B cell (primary cell): ENCODE measurements at regions of chr20 and their contacts with region 1.

Region 1: DNA sequence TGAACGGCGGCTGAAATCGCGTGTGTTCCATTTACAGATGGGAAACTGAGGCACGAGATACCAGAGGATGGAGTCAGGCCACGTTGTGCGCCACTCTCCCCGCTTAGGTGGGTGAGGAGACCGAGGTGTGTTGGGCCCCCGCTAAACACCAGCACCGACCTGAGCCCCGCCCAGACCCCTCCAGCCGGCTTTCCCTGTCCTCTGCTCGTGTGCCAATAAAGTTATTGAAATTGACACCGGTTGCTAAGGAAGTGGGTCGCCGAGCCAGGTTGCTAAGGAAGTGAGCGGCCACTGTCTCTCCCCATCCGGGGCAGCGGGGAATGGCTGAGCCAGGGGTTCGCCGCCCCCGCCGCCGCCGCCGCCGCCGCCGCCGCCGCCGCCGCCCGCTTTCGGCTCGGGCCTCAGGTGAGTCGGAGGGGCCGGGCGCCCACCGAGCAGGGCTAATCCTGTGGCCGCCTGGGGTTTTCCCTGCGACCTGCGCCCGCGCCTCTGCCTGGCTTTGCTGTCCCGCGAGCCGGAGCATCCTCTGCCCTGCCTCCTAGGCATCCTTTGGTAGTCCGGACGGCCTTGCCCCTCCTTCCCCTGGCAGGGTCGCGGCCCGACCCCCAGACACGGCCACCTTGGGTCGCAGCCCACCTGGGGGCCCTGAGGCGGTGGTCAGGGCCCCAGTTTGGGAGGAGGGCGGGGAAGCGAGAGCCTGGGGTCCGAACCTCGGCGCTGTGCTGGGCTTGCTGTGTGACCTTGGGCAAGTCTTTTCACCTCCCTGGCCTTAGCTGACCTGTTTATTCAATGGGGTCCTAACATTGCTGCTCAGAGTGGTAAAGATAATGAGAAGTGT is at the start of gene KIF3B:
- DNase-seq: peak; percentile 93
- ATAC-seq: peak; percentile 77
- H3K4me3 ChIP-seq: peak within 1 kb of the TSS; percentile 76 to 98 (median 96)
- H3K4me3 Mint-ChIP-seq: peak within 1 kb of the TSS; percentile 95
- H3K27ac ChIP-seq: peak within 1 kb of the TSS; percentile 82 to 92
- H3K27ac Mint-ChIP-seq: peak within 1 kb of the TSS; percentile 94
- H3K4me1 ChIP-seq: peaks cover 33 to 41% of the 10 kb centered on the region in 2 donors
- H3K4me1 Mint-ChIP-seq: peaks cover 51% of the 10 kb centered on the region
- H3K27me3 ChIP-seq: no peaks in the 10 kb centered on the region
- H3K27me3 Mint-ChIP-seq: no peaks in the 10 kb centered on the region
- CTCF ChIP-seq: no peak
- total RNA-seq, gene KIF3B: 16.8 and 17.5 TPM in 2 replicates

Region 2: DNA sequence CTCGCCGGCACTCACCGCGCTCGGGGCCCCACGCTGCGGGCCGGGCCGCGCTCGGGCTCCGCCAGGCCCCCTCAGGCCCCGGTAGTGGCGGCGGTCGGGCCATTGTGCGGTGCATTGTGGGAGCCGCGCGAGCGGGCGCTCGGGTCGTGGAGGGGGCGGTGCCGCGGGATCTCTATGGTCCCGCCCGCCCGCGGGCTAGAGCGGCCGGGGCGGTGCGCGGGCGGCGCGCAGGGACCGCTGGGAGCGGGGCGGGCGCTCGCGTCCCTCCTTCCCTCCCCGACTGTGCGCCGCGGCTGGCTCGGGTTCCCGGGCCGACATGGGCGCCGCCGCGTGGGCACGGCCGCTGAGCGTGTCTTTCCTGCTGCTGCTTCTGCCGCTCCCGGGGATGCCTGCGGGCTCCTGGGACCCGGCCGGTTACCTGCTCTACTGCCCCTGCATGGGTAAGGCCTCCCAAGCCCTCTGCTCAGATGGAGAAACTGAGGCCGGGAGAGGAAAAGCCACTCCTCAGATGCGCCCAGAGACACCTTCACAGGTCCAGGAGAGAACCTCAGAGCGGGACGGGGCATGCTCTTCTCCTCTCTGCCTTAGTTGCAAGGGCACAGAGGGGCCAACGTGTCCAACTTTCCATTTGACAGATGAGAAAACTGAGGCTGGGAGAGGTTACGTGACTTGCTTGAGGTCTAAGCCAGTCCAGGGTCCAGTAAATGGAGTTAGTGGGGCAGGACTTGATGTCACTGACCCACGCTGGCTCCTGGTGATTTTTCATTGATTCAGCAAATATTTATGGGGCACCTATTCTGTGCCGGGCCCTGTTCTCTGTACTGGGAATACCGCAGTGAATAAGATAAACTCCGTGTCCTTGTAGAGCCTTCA is 69.7 kb before region 1 on chr20 and contains the starts of genes PLAGL2 and POFUT1:
- CTCF ChIA-PET with region 1: no interaction called
- POLR2A ChIA-PET with region 1: interaction called, 5 read pairs
- intact Hi-C with region 1: loop called (anchors 2 kb)
- DNase-seq: peak; percentile 91
- ATAC-seq: peak; percentile 98
- H3K4me3 ChIP-seq: peak within 1 kb of the TSS; percentile 78 to 99 (median 98)
- H3K4me3 Mint-ChIP-seq: peak within 1 kb of the TSS; percentile 96
- H3K27ac ChIP-seq: peak within 1 kb of the TSS; percentile 48 to 86
- H3K27ac Mint-ChIP-seq: peak within 1 kb of the TSS; percentile 93
- H3K4me1 ChIP-seq: peaks cover 35 to 39% of the 10 kb centered on the region in 2 donors
- H3K4me1 Mint-ChIP-seq: peaks cover 68% of the 10 kb centered on the region
- H3K27me3 ChIP-seq: no peaks in the 10 kb centered on the region
- H3K27me3 Mint-ChIP-seq: no peaks in the 10 kb centered on the region
- CTCF ChIP-seq: no peak
- total RNA-seq, gene PLAGL2: 18.2 and 18.4 TPM in 2 replicates
- total RNA-seq, gene POFUT1: 18.1 and 19.3 TPM in 2 replicates

Region 3: GRCh38 chr20:32357869-32358631 is 80.5 kb after region 1 on chr20 and contains the start of gene ASXL1:
- CTCF ChIA-PET with region 1: interaction called, 3 read pairs
- POLR2A ChIA-PET with region 1: interaction called, 3 read pairs
- intact Hi-C with region 1: loop called (anchors 1 kb)
- DNase-seq: peak; percentile 96
- ATAC-seq: peak; percentile 83
- H3K4me3 ChIP-seq: peak within 1 kb of the TSS; percentile 83 to 95 (median 91)
- H3K4me3 Mint-ChIP-seq: peak within 1 kb of the TSS; percentile 95
- H3K27ac ChIP-seq: peak within 1 kb of the TSS; percentile 96 to 97
- H3K27ac Mint-ChIP-seq: peak within 1 kb of the TSS; percentile 98
- H3K4me1 ChIP-seq: peaks cover 47 to 71% of the 10 kb centered on the region in 2 donors
- H3K4me1 Mint-ChIP-seq: peaks cover 71% of the 10 kb centered on the region
- H3K27me3 ChIP-seq: no peaks in the 10 kb centered on the region
- H3K27me3 Mint-ChIP-seq: no peaks in the 10 kb centered on the region
- CTCF ChIP-seq: no peak
- total RNA-seq, gene ASXL1: 180 and 183 TPM in 2 replicates

Region 4: DNA sequence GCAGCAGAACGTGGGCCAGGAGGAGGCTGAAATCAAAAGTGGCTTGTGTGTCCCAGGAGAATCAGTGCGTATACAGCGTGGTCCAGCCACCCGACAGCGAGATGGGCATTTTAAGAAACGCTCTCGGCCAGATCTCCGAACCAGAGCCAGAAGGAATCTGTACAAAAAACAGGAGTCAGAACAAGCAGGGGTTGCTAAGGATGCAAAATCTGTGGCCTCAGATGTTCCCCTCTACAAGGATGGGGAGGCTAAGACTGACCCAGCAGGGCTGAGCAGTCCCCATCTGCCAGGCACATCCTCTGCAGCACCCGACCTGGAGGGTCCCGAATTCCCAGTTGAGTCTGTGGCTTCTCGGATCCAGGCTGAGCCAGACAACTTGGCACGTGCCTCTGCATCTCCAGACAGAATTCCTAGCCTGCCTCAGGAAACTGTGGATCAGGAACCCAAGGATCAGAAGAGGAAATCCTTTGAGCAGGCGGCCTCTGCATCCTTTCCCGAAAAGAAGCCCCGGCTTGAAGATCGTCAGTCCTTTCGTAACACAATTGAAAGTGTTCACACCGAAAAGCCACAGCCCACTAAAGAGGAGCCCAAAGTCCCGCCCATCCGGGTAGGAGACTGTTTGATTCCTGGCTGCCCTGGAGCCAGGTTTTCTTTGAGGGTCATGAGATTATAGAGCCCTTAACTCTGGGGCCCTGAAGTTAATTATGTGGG is 155.9 kb after region 1 on chr20:
- CTCF ChIA-PET with region 1: no interaction called
- POLR2A ChIA-PET with region 1: no interaction called
- intact Hi-C with region 1: no loop called
- DNase-seq: no peak
- ATAC-seq: no peak
- H3K4me3 ChIP-seq: no peak overlapping the region
- H3K4me3 Mint-ChIP-seq: no peak overlapping the region
- H3K27ac ChIP-seq: no peak overlapping the region
- H3K27ac Mint-ChIP-seq: no peak overlapping the region
- H3K4me1 ChIP-seq: no peaks in the 10 kb centered on the region
- H3K4me1 Mint-ChIP-seq: no peaks in the 10 kb centered on the region
- H3K27me3 ChIP-seq: no peaks in the 10 kb centered on the region
- H3K27me3 Mint-ChIP-seq: no peaks in the 10 kb centered on the region
- CTCF ChIP-seq: no peak

Region 5: DNA sequence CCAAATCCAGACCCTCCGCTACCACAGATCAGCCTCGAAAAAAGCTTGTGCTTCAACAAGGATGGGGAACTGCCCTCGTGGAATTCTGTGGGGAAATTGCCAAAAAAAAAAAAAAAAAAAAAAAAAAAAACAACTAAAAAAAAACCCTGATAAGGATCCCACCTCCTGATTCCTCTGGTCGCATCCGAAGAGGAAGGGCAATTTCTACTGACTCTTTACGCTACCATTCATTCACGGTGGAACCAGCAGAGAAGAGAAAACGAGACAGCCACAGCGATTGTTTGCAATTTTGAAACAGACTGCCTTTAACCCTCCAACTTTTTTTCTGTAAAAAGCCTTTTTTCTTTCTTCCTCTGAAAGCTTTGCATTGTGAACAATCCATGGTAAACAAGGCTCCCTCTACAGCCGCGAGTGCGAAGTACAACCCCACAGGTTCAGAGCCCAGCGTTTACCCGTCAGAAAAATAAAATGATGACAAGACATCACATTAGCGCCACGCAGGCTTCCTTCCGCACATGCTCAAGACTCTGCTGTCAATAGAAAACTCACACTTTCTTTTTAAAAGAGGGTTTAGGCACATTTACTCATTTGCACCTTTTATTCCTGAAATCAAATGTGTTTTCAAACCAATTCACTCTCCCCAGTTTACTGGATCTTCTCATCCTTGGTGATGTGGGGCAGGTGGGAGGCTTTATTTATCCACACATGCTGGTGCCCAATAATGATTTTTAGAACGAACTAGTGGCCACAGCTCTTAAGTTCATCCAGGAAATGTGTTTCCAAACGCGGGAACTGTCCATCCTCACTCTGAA is 207.6 kb after region 1 on chr20:
- CTCF ChIA-PET with region 1: no interaction called
- POLR2A ChIA-PET with region 1: interaction called, 6 read pairs
- intact Hi-C with region 1: loop called (anchors 5 kb)
- DNase-seq: peak; percentile 80
- ATAC-seq: peak; percentile 82
- H3K4me3 ChIP-seq: peak overlapping the region; percentile 45 to 69 (median 61)
- H3K4me3 Mint-ChIP-seq: peak overlapping the region; percentile 97
- H3K27ac ChIP-seq: no peak overlapping the region
- H3K27ac Mint-ChIP-seq: peak overlapping the region; percentile 89
- H3K4me1 ChIP-seq: peaks cover 14 to 23% of the 10 kb centered on the region in 2 donors
- H3K4me1 Mint-ChIP-seq: peaks cover 14% of the 10 kb centered on the region
- H3K27me3 ChIP-seq: peaks cover 0 to 10% (median 2%) of the 10 kb centered on the region in 4 experiments
- H3K27me3 Mint-ChIP-seq: peaks cover 5% of the 10 kb centered on the region
- CTCF ChIP-seq: peak; percentile 81